Astrocyte of the cerebellum (primary cell): ENCODE measurements at regions of chr3 and their contacts with region 1.

Region 1: DNA sequence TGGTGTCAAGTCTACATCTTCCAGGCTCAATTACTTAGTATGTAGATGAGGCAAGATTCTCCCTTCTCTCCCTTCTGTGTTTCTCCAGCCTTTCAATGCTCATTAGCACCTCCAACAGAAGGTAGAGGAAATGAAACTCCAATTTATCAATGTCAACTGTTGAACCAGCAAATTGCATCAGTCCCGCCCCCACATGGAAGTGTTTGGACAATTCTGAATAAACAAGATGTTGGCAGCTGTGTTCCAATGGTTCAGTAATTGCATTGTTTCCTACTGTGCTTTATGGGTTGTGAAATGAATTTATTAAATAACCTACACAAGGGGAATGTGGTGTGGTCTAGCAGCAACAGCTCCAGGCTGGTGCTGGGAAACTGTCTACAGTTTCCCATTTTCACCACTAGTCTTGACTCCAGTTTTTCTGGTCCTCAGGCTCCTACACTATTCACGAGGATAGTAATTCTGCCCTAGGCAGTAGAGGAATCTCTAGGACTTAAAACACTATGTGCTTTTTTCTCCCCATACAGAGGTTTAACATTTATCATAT is 91.9 kb downstream of the MB21D2 start:
- DNase-seq: no peak
- H3K4me3 ChIP-seq: no peak overlapping the region
- CTCF ChIP-seq: peak; percentile 27

Region 2: GRCh38 chr3:192917404-192918274 is 91.9 kb after region 1 on chr3 and contains the start of gene MB21D2:
- in situ Hi-C with region 1: loop called (anchors 5 kb)
- DNase-seq: peak; percentile 49
- H3K4me3 ChIP-seq: peak within 1 kb of the TSS; percentile 97
- CTCF ChIP-seq: no peak

Region 3: GRCh38 chr3:193585530-193585929 is 759.8 kb after region 1 on chr3:
- in situ Hi-C with region 1: loop called (anchors 10 kb)
- DNase-seq: no peak
- H3K4me3 ChIP-seq: no peak overlapping the region
- CTCF ChIP-seq: no peak